Activated naive CD8-positive, alpha-beta T cell treated with anti-CD3 and anti-CD28 coated beads, Interleukin-2, amount 10 ng/mL, durations not matched to agents 7 days and 5 days (primary cell): ENCODE measurements at regions of chr17 and their contacts with region 1.

Region 1: GRCh38 chr17:7687908-7688807 is at the start of gene WRAP53:
- DNase-seq: peak; percentile 98
- ATAC-seq: peak; percentile 85
- H3K4me3 Mint-ChIP-seq: peak within 1 kb of the TSS; percentile 99
- H3K27ac Mint-ChIP-seq: peak within 1 kb of the TSS; percentile 100
- H3K4me1 Mint-ChIP-seq: peaks cover 25% of the 10 kb centered on the region
- H3K27me3 Mint-ChIP-seq: no peaks in the 10 kb centered on the region
- total RNA-seq, gene WRAP53: 19.3 to 19.4 TPM

Region 2: GRCh38 chr17:7336240-7337175 is 351.6 kb before region 1 on chr17 and contains the start of gene ACAP1:
- POLR2A ChIA-PET with region 1: interaction called, 12 read pairs
- DNase-seq: peak; percentile 85
- ATAC-seq: peak; percentile 90
- H3K4me3 Mint-ChIP-seq: peak within 1 kb of the TSS; percentile 97
- H3K27ac Mint-ChIP-seq: peak within 1 kb of the TSS; percentile 96
- H3K4me1 Mint-ChIP-seq: peaks cover 43% of the 10 kb centered on the region
- H3K27me3 Mint-ChIP-seq: no peaks in the 10 kb centered on the region
- total RNA-seq, gene ACAP1: 710 to 756 TPM

Region 3: GRCh38 chr17:7484067-7484918 is 203.9 kb before region 1 on chr17 and contains the start of gene POLR2A:
- POLR2A ChIA-PET with region 1: interaction called, 46 read pairs
- DNase-seq: peak; percentile 99
- ATAC-seq: peak; percentile 69
- H3K4me3 Mint-ChIP-seq: peak within 1 kb of the TSS; percentile 94
- H3K27ac Mint-ChIP-seq: peak within 1 kb of the TSS; percentile 99
- H3K4me1 Mint-ChIP-seq: peaks cover 47% of the 10 kb centered on the region
- H3K27me3 Mint-ChIP-seq: no peaks in the 10 kb centered on the region
- total RNA-seq, gene POLR2A: 192 to 214 TPM

Region 4: GRCh38 chr17:7583253-7584109 is 104.7 kb before region 1 on chr17 and contains the start of gene MPDU1:
- POLR2A ChIA-PET with region 1: interaction called, 57 read pairs
- DNase-seq: peak; percentile 95
- ATAC-seq: peak; percentile 85
- H3K4me3 Mint-ChIP-seq: peak within 1 kb of the TSS; percentile 99
- H3K27ac Mint-ChIP-seq: peak within 1 kb of the TSS; percentile 100
- H3K4me1 Mint-ChIP-seq: peaks cover 47% of the 10 kb centered on the region
- H3K27me3 Mint-ChIP-seq: no peaks in the 10 kb centered on the region
- total RNA-seq, gene MPDU1: 50.2 TPM

Region 5: DNA sequence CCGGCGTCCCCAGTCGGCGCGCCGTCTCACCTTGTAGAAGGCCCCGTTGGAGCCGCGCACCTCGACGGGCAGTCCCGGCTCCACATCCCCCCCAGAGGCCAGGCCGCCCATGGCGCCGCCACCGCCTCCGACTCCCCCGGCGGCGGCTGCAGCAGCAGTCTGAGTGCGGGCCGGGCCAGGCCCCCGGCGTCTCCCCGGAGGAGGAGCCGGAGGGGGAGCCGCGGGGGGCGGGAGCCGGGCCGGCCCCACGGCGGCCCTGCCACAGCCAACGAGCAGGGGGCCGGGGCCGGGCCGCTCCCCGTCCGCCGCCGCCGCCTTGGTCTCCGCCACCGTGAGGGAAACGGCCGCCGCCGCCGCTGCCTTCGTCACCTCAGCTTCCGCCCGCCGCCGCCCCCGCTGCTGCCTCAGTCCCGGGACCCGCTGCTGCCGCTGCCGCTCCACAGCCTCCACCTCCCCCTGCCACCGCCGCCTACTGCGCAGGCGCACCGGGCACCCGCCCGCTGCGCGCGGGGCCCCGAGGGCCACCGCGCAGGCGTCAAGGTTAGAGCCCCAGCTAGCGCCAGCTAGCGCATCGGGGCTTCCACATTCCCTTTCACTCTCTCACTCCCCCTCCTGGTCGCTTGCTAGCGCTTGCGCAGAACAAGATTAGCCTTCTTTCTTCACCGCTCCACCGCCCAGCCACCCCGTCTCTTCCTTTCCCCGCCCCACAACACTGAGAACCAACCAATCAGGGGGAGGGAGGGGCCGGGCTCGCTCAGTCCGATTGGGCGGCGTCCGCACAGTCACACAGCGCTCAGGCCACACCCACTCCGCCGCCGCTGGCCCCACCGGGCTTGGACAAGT is 73.5 kb before region 1 on chr17 and contains the start of gene FXR2:
- POLR2A ChIA-PET with region 1: interaction called, 20 read pairs
- DNase-seq: peak; percentile 97
- ATAC-seq: peak; percentile 90
- H3K4me3 Mint-ChIP-seq: peak within 1 kb of the TSS; percentile 91
- H3K27ac Mint-ChIP-seq: peak within 1 kb of the TSS; percentile 95
- H3K4me1 Mint-ChIP-seq: peaks cover 25% of the 10 kb centered on the region
- H3K27me3 Mint-ChIP-seq: no peaks in the 10 kb centered on the region
- total RNA-seq, gene FXR2: 37.7 to 38.2 TPM

Region 6: GRCh38 chr17:7632492-7632894 is 55.7 kb before region 1 on chr17:
- POLR2A ChIA-PET with region 1: interaction called, 50 read pairs
- DNase-seq: no peak
- ATAC-seq: peak; percentile 28
- H3K4me3 Mint-ChIP-seq: no peak overlapping the region
- H3K27ac Mint-ChIP-seq: no peak overlapping the region
- H3K4me1 Mint-ChIP-seq: peaks cover 4% of the 10 kb centered on the region
- H3K27me3 Mint-ChIP-seq: no peaks in the 10 kb centered on the region

Region 7: GRCh38 chr17:7673239-7673638 is 14.9 kb before region 1 on chr17:
- POLR2A ChIA-PET with region 1: interaction called, 11 read pairs
- DNase-seq: no peak
- ATAC-seq: no peak
- H3K4me3 Mint-ChIP-seq: no peak overlapping the region
- H3K27ac Mint-ChIP-seq: no peak overlapping the region
- H3K4me1 Mint-ChIP-seq: peaks cover 3% of the 10 kb centered on the region
- H3K27me3 Mint-ChIP-seq: no peaks in the 10 kb centered on the region